ENCODE measurements at regions of chr1 and their contacts with region 1.

Region 1: DNA sequence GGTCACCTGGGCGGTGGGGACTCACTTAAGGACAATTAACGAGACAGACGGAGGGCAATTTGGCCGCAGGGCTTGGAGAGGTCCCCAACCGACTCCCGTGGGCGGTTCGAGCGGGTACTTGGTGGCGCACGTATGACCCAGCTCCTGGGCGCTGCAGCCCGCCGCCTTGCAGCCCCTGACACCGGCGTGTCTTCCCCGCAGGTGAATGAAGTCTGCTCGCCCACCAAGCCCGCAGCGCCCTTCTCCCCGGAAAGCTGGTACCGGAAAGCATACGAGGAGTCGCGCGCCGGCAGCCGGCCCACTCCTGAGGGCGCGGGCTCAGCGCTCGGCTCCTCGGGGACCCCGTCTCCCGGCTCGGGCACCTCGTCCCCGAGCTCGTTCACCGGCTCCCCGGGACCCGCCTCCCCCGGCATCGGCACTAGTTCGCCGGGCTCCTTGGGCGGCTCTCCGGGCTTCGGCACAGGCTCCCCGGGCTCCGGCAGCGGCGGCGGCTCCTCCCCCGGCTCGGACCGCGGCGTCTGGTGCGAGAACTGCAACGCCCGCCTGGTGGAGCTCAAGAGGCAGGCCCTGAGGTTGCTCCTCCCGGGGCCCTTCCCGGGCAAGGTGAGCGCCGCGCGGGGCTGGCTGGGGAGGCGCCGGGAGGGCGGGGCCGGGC is 1.4 kb downstream of the KIF26B start:
- DNase-seq: peak; percentile 65
- ATAC-seq: peak; percentile 86
- H3K4me3 ChIP-seq: peak overlapping the region; percentile 86
- H3K27ac ChIP-seq: peak overlapping the region; percentile 4; the same call in 1 of the 2 replicates
- H3K4me1 ChIP-seq: no peaks in the 10 kb centered on the region
- H3K27me3 ChIP-seq: no peaks in the 10 kb centered on the region
- CTCF ChIP-seq: peak; percentile 77
- POLR2A ChIP-seq: no peak
- RAD21 ChIP-seq: peak; percentile 74

Region 2: GRCh38 chr1:245079021-245079609 is 77.1 kb before region 1 on chr1:
- CTCF ChIA-PET with region 1: interaction called, 8 read pairs
- POLR2A ChIA-PET with region 1: no interaction called
- dilution Hi-C with region 1: no loop called
- in situ Hi-C with region 1: no loop called
- intact Hi-C with region 1: loop called (anchors 1 kb)
- DNase-seq: peak; percentile 77
- ATAC-seq: peak; percentile 69
- H3K4me3 ChIP-seq: no peak overlapping the region
- H3K27ac ChIP-seq: no peak overlapping the region
- H3K4me1 ChIP-seq: peaks cover 2% of the 10 kb centered on the region; the same call in 1 of the 2 replicates
- H3K27me3 ChIP-seq: no peaks in the 10 kb centered on the region
- CTCF ChIP-seq: peak; percentile 94
- POLR2A ChIP-seq: no peak
- RAD21 ChIP-seq: peak; percentile 92

Region 3: DNA sequence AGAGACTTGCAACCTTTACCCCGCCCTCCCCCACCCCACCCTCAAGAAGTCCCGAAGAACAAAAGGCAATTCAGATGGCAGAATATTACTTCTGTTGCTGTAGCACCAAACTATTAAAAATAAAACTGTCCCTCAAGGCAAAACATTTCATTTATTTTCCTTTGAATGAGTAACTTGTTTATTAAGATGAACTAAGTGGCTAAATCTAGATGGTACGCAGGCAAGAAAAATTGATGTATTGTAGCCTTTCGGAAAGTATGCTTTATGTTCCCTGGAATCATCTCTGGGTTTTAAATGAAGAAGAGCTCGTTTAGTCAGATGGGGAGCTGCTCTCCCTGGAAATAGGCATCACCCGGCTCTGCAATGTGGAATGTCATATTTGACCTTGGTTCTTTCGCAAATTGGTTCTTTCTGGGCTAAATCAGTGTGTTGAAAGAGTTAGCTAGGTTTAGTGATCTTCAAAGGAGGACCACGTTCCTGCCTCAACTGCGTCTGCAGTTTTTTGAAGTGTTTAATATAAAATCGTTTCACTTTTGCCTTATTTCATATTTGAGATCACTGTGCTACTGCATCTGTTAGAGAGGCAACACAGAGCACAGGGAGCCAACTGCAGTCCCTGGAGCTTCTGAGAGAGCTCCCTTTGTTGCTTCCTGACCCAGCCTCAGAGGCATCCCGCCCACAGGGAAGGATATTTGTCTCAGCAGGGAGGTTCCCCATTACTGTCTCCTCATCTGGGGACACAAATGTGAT is 60.3 kb after region 1 on chr1:
- CTCF ChIA-PET with region 1: no interaction called
- POLR2A ChIA-PET with region 1: no interaction called
- dilution Hi-C with region 1: no loop called
- in situ Hi-C with region 1: no loop called
- intact Hi-C with region 1: no loop called
- DNase-seq: no peak
- ATAC-seq: no peak
- H3K4me3 ChIP-seq: no peak overlapping the region
- H3K27ac ChIP-seq: no peak overlapping the region
- H3K4me1 ChIP-seq: peaks cover 3% of the 10 kb centered on the region; the same call in 1 of the 2 replicates
- H3K27me3 ChIP-seq: no peaks in the 10 kb centered on the region
- CTCF ChIP-seq: no peak
- POLR2A ChIP-seq: no peak
- RAD21 ChIP-seq: no peak

Region 4: DNA sequence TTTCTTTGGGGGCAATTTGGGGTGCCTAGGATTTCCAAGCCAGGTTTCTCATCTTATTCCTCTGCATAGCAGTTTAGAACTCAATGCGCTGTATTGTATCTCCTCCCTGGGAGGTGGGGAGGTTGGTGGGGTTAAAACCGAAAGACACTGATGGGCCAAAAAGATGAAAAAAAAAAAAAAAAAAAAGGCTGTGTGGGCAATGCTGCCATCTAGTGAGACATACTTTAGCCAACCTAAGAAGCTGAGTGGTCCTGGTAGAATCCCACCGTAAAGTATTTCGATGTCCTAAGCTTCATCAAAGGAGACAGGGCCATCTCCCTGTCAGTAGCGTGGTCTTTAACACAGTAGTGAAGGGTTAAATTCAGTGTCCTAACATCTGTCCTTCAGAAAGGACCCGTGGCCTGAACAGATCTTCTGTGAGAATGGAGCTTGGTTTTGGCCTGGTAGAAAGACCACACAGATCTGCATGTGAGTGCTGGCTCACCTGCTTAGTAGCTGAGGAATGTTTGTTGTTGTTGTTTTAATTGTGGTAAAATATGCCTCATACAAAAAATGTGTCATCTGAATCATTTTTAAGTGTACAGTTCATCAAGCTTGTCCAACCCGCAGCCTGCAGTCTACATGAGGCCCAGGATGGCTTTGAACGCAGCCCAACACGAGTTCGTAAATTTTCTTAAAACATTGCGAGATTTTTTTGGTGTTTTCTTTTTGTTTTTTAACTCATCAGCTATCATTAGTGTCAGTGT is 224.8 kb after region 1 on chr1:
- CTCF ChIA-PET with region 1: interaction called, 9 read pairs
- POLR2A ChIA-PET with region 1: no interaction called
- dilution Hi-C with region 1: no loop called
- in situ Hi-C with region 1: no loop called
- intact Hi-C with region 1: loop called (anchors 2 kb)
- DNase-seq: no peak
- ATAC-seq: no peak; the same call in 1 of the 2 replicates
- H3K4me3 ChIP-seq: no peak overlapping the region
- H3K27ac ChIP-seq: no peak overlapping the region
- H3K4me1 ChIP-seq: no peaks in the 10 kb centered on the region
- H3K27me3 ChIP-seq: no peaks in the 10 kb centered on the region
- CTCF ChIP-seq: peak; percentile 34
- POLR2A ChIP-seq: no peak
- RAD21 ChIP-seq: no peak

Region 5: DNA sequence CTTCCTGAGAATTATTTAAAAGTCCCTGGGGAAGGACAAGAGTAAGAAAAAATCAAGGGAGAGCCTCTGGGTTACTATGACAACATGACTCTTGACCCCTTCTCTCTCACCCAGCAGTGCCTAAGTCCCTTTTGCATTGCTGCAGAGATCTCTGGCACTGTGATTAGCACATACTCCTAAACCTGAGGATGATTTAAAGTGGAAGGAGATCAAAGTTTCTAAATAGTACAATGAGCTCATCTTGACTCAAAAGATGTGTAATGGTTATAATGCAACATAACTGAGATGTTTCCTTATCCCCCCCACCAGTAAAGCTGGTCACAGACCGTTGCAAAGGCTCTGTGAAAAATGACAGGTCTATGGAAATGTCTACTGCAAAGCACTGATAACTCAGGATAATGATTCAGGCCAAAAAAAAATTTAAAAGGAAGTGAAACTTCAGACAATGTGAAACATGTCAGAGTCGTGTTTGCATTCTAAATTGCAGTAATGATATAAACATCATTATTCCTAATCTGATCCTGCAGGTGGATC is 517.7 kb after region 1 on chr1:
- CTCF ChIA-PET with region 1: no interaction called
- POLR2A ChIA-PET with region 1: no interaction called
- dilution Hi-C with region 1: no loop called
- in situ Hi-C with region 1: no loop called
- intact Hi-C with region 1: loop called (anchors 5 kb)
- DNase-seq: peak; percentile 60
- ATAC-seq: peak; percentile 60
- H3K4me3 ChIP-seq: no peak overlapping the region
- H3K27ac ChIP-seq: no peak overlapping the region
- H3K4me1 ChIP-seq: peaks cover 6% of the 10 kb centered on the region
- H3K27me3 ChIP-seq: no peaks in the 10 kb centered on the region
- CTCF ChIP-seq: no peak
- POLR2A ChIP-seq: no peak
- RAD21 ChIP-seq: no peak

Region 6: GRCh38 chr1:246002725-246003441 is 846.7 kb after region 1 on chr1:
- CTCF ChIA-PET with region 1: interaction called, 6 read pairs
- POLR2A ChIA-PET with region 1: no interaction called
- dilution Hi-C with region 1: no loop called
- in situ Hi-C with region 1: loop called (anchors 5 kb)
- intact Hi-C with region 1: loop called (anchors 1 kb)
- DNase-seq: peak; percentile 90
- ATAC-seq: peak; percentile 46
- H3K4me3 ChIP-seq: no peak overlapping the region
- H3K27ac ChIP-seq: peak overlapping the region; percentile 29; the same call in 1 of the 2 replicates
- H3K4me1 ChIP-seq: peaks cover 17% of the 10 kb centered on the region
- H3K27me3 ChIP-seq: no peaks in the 10 kb centered on the region
- CTCF ChIP-seq: peak; percentile 92
- POLR2A ChIP-seq: 0 out of 2 replicates have a peak, but pooled peaks have one; percentile 49
- RAD21 ChIP-seq: peak; percentile 97

Region 7: DNA sequence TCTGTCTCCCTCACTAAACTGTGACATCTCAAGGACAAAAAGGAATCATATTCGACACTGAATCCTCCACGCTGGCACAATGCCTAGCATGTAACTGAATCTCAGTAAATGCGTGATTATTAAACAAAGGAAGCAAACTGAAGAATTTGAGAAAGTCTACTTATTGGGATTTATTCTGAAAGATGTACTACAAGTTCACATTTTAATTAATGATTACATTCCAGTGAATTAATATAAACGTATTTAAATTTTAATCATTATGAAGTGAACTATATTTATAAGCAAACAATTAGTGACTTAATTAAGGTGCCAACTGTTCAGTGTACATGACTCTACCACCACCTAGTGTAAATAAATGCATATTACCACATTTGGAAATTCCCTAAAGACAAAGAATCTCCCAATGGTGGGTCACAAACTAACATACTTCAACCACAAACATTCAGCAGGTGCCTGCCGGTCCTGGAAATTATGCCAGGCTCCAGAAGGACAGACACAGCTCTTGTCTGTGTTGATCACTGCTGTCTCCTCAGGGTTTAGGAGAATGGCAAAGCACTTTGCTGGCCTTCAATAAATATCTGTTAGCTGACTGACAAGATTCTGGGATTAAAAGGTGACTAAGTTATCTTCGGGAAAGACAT is 1294.5 kb after region 1 on chr1:
- CTCF ChIA-PET with region 1: interaction called, 5 read pairs
- POLR2A ChIA-PET with region 1: no interaction called
- dilution Hi-C with region 1: no loop called
- in situ Hi-C with region 1: loop called (anchors 10 kb)
- intact Hi-C with region 1: loop called (anchors 1 kb)
- DNase-seq: peak; percentile 35
- ATAC-seq: peak; percentile 61
- H3K4me3 ChIP-seq: no peak overlapping the region
- H3K27ac ChIP-seq: no peak overlapping the region
- H3K4me1 ChIP-seq: peaks cover 2% of the 10 kb centered on the region
- H3K27me3 ChIP-seq: no peaks in the 10 kb centered on the region
- CTCF ChIP-seq: peak; percentile 82
- POLR2A ChIP-seq: no peak
- RAD21 ChIP-seq: peak; percentile 87